A549 (cell line): ENCODE measurements at regions of chr20 and their contacts with region 1.

Region 1: GRCh38 chr20:46013826-46014516 is 5.3 kb downstream of the MMP9 start:
- DNase-seq: peak; percentile 68 to 81
- ATAC-seq: peak; percentile 89 to 93
- H3K4me3 ChIP-seq: peak overlapping the region; percentile 44
- H3K27ac ChIP-seq: peak overlapping the region; percentile 44 to 69; a peak in 2 of 6 replicates
- H3K4me1 ChIP-seq: peaks cover 8% of the 10 kb centered on the region
- CTCF ChIP-seq: peak; percentile 74
- EP300 ChIP-seq: no peak
- POLR2A ChIP-seq: 0 out of 2 replicates have a peak, but pooled peaks have one; percentile 23
- RAD21 ChIP-seq: peak; percentile 53 to 83

Region 2: GRCh38 chr20:45685896-45686295 is 328.1 kb before region 1 on chr20:
- CTCF ChIA-PET with region 1: no interaction called
- POLR2A ChIA-PET with region 1: no interaction called
- DNase-seq: peak; percentile 21 to 25
- ATAC-seq: peak; percentile 80 to 83
- H3K4me3 ChIP-seq: no peak overlapping the region
- H3K27ac ChIP-seq: no peak overlapping the region
- H3K4me1 ChIP-seq: no peaks in the 10 kb centered on the region
- CTCF ChIP-seq: no peak
- EP300 ChIP-seq: no peak
- POLR2A ChIP-seq: no peak
- RAD21 ChIP-seq: 0 out of 5 replicates have a peak, but pooled peaks of 1 of the 2 experiments have one; percentile 3

Region 3: DNA sequence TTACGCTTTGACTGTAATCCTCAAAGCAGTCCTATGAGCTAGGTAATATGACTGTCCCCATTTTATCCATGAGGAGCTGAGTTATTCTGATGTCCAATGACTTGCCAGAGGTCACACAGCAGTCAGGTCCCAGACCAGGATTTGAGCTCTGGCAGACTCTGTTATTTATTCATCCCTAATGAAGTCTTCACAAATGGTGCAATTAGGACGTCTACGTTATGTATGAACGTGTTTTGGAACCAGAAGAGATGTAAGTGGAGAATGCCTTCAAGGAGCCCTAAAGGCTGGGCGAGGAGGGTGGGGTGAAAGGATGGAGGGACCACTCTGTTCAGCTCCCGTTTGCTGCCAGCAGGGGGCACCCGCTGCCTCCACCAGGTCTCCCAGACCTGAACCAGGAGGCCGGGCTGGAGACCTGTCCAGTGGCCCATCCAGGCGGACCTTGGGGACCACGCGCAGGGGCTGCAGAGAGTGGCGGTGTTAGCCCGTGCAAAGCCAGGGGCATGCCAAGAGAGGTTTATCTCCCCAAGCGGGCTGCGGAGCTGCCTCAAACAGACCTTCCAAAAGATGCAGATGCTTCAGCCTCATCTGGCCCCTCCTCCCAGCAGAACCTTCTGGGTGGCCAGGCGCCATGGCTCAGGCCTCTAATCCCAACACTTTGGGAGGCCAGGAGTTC is 26.7 kb before region 1 on chr20:
- CTCF ChIA-PET with region 1: interaction called, 450 read pairs
- POLR2A ChIA-PET with region 1: interaction called, 5 read pairs
- DNase-seq: peak; percentile 83 to 86
- ATAC-seq: peak; percentile 97 to 99
- H3K4me3 ChIP-seq: no peak overlapping the region
- H3K27ac ChIP-seq: no peak overlapping the region
- H3K4me1 ChIP-seq: peaks cover 5% of the 10 kb centered on the region
- CTCF ChIP-seq: peak; percentile 82
- EP300 ChIP-seq: no peak
- POLR2A ChIP-seq: no peak
- RAD21 ChIP-seq: peak; percentile 72 to 79

Region 4: DNA sequence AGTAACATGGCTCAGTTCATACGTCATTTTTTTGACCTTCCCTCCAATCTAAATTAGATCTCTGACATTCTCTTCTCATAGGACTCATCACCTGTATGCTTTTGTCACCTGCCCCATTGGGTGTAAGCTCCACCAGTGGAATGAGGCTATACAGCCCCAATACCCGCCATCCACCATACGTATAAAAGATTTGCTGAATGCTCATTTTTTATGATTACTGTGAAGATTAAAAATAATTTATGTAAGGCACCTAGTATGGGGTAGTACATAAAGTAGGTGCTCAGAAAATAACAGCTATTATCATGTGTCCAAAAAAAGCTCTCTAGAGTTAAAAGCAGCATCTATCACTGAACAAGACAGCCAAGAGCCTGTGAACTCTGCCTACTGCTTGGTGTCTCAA is 51.7 kb after region 1 on chr20:
- CTCF ChIA-PET with region 1: interaction called, 13 read pairs
- POLR2A ChIA-PET with region 1: no interaction called
- DNase-seq: no peak
- ATAC-seq: no peak
- H3K4me3 ChIP-seq: no peak overlapping the region
- H3K27ac ChIP-seq: no peak overlapping the region
- H3K4me1 ChIP-seq: no peaks in the 10 kb centered on the region
- CTCF ChIP-seq: no peak
- EP300 ChIP-seq: no peak
- POLR2A ChIP-seq: no peak
- RAD21 ChIP-seq: no peak

Region 5: DNA sequence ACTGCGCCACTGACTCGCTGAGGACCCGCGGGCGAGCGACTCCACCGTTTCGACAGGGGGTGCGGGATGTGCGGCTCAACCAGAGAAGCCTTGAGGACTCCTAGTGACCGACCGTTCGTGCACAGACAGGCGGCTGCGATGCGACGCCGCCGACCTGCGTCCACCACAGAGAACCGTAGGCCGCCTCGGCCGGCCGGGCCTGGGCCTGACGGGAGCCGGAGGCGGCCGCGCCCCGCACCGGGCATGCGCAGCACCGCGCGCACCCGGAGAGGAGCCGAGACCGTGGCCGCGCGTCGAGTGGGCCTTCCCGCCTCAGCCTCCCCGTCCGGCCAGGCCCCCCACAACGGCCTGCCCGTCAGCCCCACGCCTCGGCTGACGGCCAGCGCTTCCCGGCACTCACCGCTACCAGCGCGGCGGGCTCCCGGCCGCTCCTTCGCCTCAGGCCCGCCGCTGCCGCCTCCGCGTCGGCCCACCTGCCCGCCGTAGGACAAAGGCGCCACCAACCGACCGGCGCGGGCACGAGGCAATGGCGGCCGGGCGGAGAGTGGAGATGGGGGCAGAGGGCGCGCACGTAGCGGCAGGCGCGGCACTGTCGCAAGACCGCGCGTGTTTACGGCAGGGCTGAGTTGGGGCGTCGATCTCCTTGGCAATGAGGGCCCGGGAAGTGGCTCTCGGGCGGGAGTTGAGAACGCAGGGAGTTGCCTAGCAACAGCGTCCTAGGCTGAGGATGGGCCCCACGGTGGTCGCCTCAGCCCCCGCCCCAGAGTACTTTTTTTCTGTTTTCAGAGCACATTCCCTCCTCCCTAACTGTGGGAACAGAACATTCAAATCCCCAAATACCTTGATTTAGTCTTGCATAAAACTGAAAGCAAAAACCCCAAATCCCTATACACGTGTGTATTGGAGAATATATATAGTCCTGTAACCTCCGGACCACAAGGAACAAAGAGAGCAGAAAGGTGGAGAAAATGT is 75.7 kb after region 1 on chr20 and contains the start of gene NCOA5:
- CTCF ChIA-PET with region 1: interaction called, 15 read pairs
- POLR2A ChIA-PET with region 1: no interaction called
- DNase-seq: peak; percentile 91 to 98
- ATAC-seq: peak; percentile 92 to 93
- H3K4me3 ChIP-seq: peak within 1 kb of the TSS; percentile 70
- H3K27ac ChIP-seq: peak within 1 kb of the TSS; percentile 97 to 98
- H3K4me1 ChIP-seq: peaks cover 38% of the 10 kb centered on the region
- CTCF ChIP-seq: peak; percentile 39; the same call in 1 of the 3 replicates
- EP300 ChIP-seq: no peak
- POLR2A ChIP-seq: peak; percentile 79
- RAD21 ChIP-seq: peak; percentile 23 to 41; a peak in 1 of 5 replicates
- polyA plus RNA-seq, gene NCOA5: 22.2 and 28.0 TPM in 2 replicates

Region 6: GRCh38 chr20:46157625-46158024 is 143.7 kb after region 1 on chr20:
- CTCF ChIA-PET with region 1: interaction called, 10 read pairs
- POLR2A ChIA-PET with region 1: no interaction called
- DNase-seq: no peak
- ATAC-seq: no peak
- H3K4me3 ChIP-seq: no peak overlapping the region
- H3K27ac ChIP-seq: no peak overlapping the region
- H3K4me1 ChIP-seq: no peaks in the 10 kb centered on the region
- CTCF ChIP-seq: no peak
- EP300 ChIP-seq: no peak
- POLR2A ChIP-seq: no peak
- RAD21 ChIP-seq: no peak

Region 7: DNA sequence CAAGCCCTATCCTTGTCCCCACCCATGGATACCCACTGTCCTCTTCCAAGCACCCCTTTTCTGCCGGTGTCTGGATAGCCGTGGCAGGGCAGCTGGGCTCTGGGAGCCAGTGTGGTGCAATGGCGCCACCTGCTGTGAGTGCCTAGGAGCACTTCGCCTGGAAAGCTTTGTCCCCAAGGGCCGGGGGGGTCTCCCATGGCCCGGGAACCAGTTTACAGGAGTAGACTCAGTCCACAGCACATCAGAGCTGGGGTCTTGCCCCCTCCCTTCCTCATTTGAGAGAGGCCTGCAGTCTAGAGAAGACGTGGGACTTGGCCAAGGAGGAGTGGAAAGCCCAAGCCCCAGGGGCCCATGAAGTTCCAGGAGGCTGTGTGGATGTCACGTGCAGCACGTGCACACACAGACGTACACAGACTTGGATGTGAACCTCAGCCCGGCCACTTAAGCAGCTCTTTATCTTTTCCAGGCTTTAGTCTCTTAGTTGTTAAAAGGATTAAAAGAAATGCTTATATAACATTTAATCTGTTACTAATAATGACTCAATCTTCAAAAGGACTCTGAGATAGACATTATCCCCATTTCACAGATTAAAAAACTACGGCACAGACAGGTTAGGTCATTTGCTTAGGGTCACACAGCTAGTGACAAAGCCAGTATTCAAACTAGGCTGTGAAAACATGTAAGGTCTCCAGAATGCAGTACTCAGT is 335.2 kb after region 1 on chr20:
- CTCF ChIA-PET with region 1: interaction called, 25 read pairs
- POLR2A ChIA-PET with region 1: interaction called, 3 read pairs
- DNase-seq: peak; percentile 43 to 67
- ATAC-seq: peak; percentile 46 to 77; a peak in 4 of 6 replicates
- H3K4me3 ChIP-seq: no peak overlapping the region
- H3K27ac ChIP-seq: no peak overlapping the region
- H3K4me1 ChIP-seq: peaks cover 14% of the 10 kb centered on the region
- CTCF ChIP-seq: peak; percentile 66
- EP300 ChIP-seq: no peak
- POLR2A ChIP-seq: no peak
- RAD21 ChIP-seq: peak; percentile 74 to 80